Activated naive CD4-positive, alpha-beta T cell treated with anti-CD3 and anti-CD28 coated beads for 36 hours (primary cell): ENCODE measurements at regions of chr18 and their contacts with region 1.

Region 1: GRCh38 chr18:47100214-47100831 is 50.0 kb downstream of the HDHD2 start:
- DNase-seq: peak; percentile 83
- H3K4me3 Mint-ChIP-seq: no peak overlapping the region
- H3K27ac Mint-ChIP-seq: no peak overlapping the region
- H3K4me1 Mint-ChIP-seq: no peaks in the 10 kb centered on the region
- H3K27me3 Mint-ChIP-seq: no peaks in the 10 kb centered on the region

Region 2: GRCh38 chr18:47050468-47050867 is 49.9 kb before region 1 on chr18:
- CTCF ChIA-PET with region 1: interaction called, 3 read pairs
- intact Hi-C with region 1: loop called (anchors 5 kb)
- DNase-seq: peak; percentile 31
- H3K4me3 Mint-ChIP-seq: no peak overlapping the region
- H3K27ac Mint-ChIP-seq: no peak overlapping the region
- H3K4me1 Mint-ChIP-seq: peaks cover 3% of the 10 kb centered on the region
- H3K27me3 Mint-ChIP-seq: peaks cover 3% of the 10 kb centered on the region

Region 3: GRCh38 chr18:47260120-47260923 is 160.0 kb after region 1 on chr18:
- CTCF ChIA-PET with region 1: no interaction called
- intact Hi-C with region 1: loop called (anchors 5 kb)
- DNase-seq: peak; percentile 65
- H3K4me3 Mint-ChIP-seq: no peak overlapping the region
- H3K27ac Mint-ChIP-seq: no peak overlapping the region
- H3K4me1 Mint-ChIP-seq: peaks cover 7% of the 10 kb centered on the region
- H3K27me3 Mint-ChIP-seq: peaks cover 81% of the 10 kb centered on the region

Region 4: DNA sequence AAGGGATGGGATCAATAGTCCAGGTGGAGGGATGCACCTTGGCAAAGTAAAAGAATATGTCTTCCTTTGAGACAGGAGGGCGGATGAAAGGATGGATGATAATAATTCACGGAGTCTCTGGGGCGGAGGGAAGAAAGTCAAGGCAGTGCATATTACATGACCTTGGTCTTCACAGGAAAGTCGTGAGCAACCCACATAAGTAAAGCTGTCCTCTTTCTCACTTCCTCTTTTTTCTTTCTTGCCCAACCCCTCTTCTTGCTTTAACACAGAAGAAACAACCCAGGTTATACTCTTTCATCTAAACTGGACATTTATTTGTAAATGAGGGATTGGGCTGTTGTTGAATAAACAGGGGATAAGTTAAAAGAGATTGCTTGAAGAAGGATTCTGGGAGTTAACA is 319.8 kb after region 1 on chr18:
- CTCF ChIA-PET with region 1: no interaction called
- intact Hi-C with region 1: no loop called
- DNase-seq: no peak
- H3K4me3 Mint-ChIP-seq: no peak overlapping the region
- H3K27ac Mint-ChIP-seq: no peak overlapping the region
- H3K4me1 Mint-ChIP-seq: no peaks in the 10 kb centered on the region
- H3K27me3 Mint-ChIP-seq: peaks cover 14% of the 10 kb centered on the region